ENCODE measurements at regions of chr22 and their contacts with region 1.

Region 1: DNA sequence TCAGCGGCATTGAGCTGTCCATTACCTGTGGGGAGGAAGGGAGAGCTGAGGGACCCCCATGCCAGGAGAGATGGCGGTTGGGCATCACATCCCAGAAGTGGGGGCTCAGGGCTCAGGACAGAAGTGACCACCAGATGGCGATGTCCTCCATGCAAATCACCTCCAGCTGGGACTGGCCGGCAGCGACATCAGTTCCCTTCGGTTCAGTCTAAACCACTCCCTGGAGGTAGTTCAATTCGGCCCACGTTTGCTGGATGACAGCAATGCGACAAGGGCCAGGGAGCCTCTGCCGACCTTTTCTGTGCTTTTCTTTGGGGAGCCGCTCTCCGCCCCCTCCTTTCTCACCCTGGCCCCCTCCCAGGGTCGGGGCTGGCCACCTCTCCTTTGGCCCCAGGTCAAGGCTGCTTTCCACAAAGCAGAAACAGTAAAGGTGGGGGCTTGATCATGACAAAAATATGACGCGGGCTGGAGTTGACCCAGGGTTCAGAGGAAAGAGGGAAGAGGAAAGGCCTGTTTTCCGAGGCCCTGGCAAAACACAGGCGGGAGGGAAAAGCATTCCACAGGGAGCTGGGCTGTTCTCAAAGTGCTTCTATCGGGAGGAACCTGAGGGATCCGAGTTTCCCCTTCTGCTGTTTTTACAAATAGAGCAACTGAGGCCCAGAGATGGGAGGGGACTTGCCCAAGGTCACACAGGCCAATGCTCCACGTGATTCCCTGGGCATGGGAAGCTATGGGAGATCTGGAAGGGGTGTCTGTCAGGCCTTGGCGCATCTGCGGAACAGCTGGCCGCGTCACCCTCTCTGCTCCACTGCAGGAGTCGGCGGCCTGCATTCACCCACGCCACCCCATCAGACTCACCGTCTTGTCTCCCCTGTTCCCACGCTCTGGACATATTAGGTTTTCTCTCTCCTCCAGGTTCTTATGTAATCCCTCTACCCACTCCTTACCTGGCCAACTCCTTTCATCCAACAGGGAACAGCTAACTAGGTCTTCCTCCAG is 54.7 kb downstream of the FBXO7 start:
- DNase-seq: peak; percentile 44
- H3K4me3 Mint-ChIP-seq: no peak overlapping the region
- H3K27ac Mint-ChIP-seq: no peak overlapping the region
- H3K4me1 Mint-ChIP-seq: no peaks in the 10 kb centered on the region
- H3K27me3 Mint-ChIP-seq: no peaks in the 10 kb centered on the region

Region 2: DNA sequence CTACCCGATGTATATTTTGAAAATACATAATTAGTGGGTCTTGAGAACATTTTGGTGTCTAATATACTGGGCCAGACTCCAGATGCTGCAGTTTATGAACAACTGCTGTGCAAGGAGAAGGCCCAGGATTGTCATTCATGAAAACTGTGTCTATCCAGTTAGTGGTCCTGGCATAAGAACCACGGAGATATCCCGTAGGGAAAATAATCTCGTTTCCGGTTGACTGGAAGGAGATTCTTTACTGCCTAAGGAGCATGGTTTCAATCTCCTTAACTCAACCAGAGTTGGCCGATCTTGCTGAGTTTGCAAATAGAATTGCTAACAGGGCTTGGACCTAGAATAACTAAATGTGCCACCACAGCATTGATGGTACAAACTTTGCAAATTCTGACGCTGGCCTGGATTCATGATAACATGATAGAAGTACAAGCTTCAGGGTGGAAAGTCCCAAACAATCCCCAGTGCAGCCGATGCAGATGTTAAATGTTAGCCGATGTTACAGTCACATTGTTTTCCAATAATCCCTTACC is 112.7 kb before region 1 on chr22:
- intact Hi-C with region 1: no loop called
- DNase-seq: no peak
- H3K4me3 Mint-ChIP-seq: no peak overlapping the region
- H3K27ac Mint-ChIP-seq: no peak overlapping the region
- H3K4me1 Mint-ChIP-seq: peaks cover 20% of the 10 kb centered on the region
- H3K27me3 Mint-ChIP-seq: peaks cover 13% of the 10 kb centered on the region

Region 3: DNA sequence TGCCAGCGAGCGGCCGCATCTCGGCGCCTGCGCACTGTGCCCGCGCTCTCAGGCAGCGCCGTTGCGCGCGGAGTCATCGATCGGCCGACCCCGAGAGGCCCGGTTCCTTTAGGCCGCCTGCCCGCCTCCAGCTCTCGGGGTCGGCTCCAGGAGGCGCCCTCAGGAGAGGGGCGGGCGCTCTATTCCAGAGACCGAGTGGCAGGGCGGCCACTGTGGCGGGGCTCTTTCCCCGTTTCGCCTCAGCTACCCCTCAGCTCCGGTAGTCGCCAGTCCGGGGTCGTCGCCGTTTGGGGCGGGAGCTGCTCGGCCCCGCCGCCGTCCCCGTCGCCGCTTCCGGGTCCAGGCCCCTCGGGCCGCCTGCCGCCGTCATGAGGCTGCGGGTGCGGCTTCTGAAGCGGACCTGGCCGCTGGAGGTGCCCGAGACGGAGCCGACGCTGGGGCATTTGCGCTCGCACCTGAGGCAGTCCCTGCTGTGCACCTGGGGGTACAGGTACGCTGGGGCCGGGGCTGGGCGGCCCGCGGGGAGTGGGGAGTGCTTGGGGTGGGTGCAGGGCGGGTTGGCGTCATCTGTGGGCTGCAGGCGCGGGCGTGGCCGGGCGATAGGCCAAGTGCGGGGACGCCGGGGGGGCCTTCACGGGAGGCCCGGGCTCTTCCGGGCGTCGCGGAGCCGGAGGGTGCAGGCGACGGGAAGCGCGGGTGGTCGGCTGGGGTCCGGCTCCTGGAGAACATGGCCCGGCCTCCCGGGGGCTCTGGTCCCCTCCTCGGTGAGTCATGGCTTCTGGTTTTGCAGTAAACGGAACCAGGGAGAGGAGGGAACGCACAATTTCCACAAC is 54.4 kb before region 1 on chr22 and contains the start of gene FBXO7:
- intact Hi-C with region 1: no loop called
- DNase-seq: peak; percentile 84
- H3K4me3 Mint-ChIP-seq: peak within 1 kb of the TSS; percentile 93
- H3K27ac Mint-ChIP-seq: peak within 1 kb of the TSS; percentile 93
- H3K4me1 Mint-ChIP-seq: peaks cover 21% of the 10 kb centered on the region
- H3K27me3 Mint-ChIP-seq: no peaks in the 10 kb centered on the region
- total RNA-seq, gene FBXO7: 104 and 106 TPM in 2 replicates

Region 4: DNA sequence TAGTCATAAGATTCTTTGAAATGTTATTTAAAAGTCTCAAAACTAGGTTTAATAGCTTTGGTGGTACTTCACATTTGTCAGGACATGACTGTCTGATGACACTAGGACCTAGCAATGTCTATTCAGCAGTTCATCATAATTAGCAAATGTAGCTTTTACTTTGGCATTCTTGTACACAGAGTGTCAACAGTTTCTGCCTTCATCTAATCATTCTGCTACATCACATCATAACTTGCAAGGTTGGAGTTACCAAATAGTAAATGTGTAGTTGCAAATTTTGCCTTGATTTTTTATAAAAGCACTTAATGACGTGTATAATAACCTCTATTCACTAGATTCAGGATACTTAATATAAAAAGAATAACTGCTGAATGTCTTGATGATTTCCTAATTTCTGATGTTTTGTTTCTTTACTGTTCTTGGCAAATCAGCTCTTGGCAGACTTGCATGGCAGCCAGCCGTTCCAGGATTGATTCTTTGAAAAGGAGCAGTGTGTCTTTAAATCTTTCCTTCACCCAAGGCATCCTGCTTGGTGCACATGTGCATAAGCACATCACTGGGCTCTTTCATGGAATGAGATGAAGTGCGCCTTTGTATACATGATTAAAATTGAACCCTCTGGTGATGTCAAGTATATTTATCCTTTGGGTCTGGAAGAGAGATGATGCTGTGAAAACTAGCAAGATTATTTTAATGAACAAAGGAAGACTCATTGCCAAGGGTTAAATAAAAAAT is 42.5 kb before region 1 on chr22:
- intact Hi-C with region 1: no loop called
- DNase-seq: no peak
- H3K4me3 Mint-ChIP-seq: no peak overlapping the region
- H3K27ac Mint-ChIP-seq: no peak overlapping the region
- H3K4me1 Mint-ChIP-seq: peaks cover 18% of the 10 kb centered on the region
- H3K27me3 Mint-ChIP-seq: no peaks in the 10 kb centered on the region

Region 5: GRCh38 chr22:32509045-32509444 is 20.2 kb before region 1 on chr22:
- intact Hi-C with region 1: no loop called
- DNase-seq: no peak
- H3K4me3 Mint-ChIP-seq: no peak overlapping the region
- H3K27ac Mint-ChIP-seq: no peak overlapping the region
- H3K4me1 Mint-ChIP-seq: no peaks in the 10 kb centered on the region
- H3K27me3 Mint-ChIP-seq: no peaks in the 10 kb centered on the region

Region 6: DNA sequence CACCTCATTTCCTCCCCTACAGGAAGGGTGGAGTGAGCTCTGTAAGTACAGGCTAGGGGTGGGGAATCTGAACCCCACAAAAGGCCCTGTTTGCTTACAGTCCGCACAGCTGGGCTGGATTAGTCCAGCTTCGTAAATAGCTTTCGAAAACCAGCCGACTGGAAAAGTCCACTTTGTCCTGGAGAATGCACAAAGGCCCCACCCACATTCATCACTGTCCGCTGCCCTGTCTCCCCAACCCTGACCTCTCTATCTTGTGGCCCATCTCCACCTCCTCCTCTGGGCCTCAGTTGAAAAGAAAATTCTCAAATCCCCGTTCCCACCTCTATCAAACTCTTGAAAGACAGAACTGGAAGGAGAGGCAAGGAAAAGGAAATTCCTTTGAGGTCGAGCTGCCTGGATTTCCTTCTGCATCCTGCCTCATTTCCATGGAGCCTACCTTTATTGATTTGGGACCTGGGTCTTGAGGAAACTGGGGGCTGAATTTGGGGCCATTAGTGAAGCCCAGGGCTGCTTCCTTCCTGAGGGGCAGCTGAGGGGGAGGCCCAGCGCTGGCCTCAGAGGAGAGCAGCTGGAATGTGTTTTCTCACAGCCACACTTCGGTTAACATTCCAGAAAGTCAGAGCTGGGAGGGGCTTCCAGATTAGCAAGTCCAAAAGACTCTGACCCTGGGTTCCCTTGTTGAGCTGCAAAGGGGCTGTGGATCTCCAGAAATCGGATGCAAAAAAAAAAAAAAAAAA is 92.9 kb after region 1 on chr22:
- intact Hi-C with region 1: loop called (anchors 10 kb)
- DNase-seq: no peak
- H3K4me3 Mint-ChIP-seq: no peak overlapping the region
- H3K27ac Mint-ChIP-seq: no peak overlapping the region
- H3K4me1 Mint-ChIP-seq: no peaks in the 10 kb centered on the region
- H3K27me3 Mint-ChIP-seq: no peaks in the 10 kb centered on the region

Region 7: DNA sequence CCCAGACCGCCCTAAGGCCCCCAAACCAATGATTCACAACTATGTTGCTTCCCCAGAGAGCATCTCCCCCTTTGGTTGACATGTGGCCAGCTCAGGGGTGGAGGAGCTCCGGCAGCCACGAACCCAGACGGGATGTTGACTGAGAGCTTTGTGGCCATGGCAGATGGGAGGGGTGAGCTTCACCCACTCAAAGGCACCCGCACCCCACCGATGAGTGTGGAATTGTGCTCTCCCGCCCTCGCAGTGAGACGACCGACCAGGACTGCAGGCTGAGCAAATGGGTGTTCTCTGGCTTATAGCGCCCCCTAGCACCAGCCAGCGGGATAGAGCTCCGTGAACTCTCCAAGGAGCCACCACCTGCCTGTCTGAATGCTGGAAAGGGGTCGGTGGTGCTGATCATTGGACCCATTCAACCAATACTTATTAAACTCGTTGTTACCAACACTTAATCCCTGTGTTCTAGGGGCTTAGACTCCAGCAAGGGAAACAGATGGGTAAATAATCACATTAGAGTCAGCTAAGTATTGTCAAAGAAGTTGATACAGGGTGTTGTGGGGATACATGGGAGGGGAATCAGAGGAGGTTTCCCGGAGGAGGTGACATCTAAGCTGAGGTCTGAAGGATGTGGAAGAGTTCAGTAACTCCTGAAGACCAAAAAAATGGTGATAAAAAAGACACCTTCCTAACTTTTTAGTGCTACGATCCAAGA is 267.7 kb after region 1 on chr22:
- intact Hi-C with region 1: loop called (anchors 2 kb)
- DNase-seq: peak; percentile 43
- H3K4me3 Mint-ChIP-seq: no peak overlapping the region
- H3K27ac Mint-ChIP-seq: no peak overlapping the region
- H3K4me1 Mint-ChIP-seq: peaks cover 3% of the 10 kb centered on the region
- H3K27me3 Mint-ChIP-seq: peaks cover 37% of the 10 kb centered on the region

Region 8: GRCh38 chr22:32985899-32986765 is 456.8 kb after region 1 on chr22:
- intact Hi-C with region 1: loop called (anchors 10 kb)
- DNase-seq: peak; percentile 22
- H3K4me3 Mint-ChIP-seq: no peak overlapping the region
- H3K27ac Mint-ChIP-seq: no peak overlapping the region
- H3K4me1 Mint-ChIP-seq: no peaks in the 10 kb centered on the region
- H3K27me3 Mint-ChIP-seq: no peaks in the 10 kb centered on the region

Measured in activated T-helper 2 cell treated with anti-CD3 and anti-CD28 coated beads, Interferon-gamma antibody, Interleukin-2, Interleukin-4, amounts not matched to agents 10 μg/mL and 5 μg/mL and 100 μg/mL, durations not matched to agents 14 hours and 24 hours and 36 hours (primary cell).